ENCODE measurements at regions of chr10 and their contacts with region 1.

Region 1: GRCh38 chr10:66187053-66187733 is 738.6 kb upstream of the LRRTM3 start:
- DNase-seq: no peak
- ATAC-seq: no peak
- H3K4me3 ChIP-seq: no peak overlapping the region
- H3K27ac ChIP-seq: no peak overlapping the region
- H3K4me1 ChIP-seq: no peaks in the 10 kb centered on the region
- H3K27me3 ChIP-seq: no peaks in the 10 kb centered on the region
- CTCF ChIP-seq: no peak
- POLR2A ChIP-seq: no peak
- RAD21 ChIP-seq: no peak

Region 2: DNA sequence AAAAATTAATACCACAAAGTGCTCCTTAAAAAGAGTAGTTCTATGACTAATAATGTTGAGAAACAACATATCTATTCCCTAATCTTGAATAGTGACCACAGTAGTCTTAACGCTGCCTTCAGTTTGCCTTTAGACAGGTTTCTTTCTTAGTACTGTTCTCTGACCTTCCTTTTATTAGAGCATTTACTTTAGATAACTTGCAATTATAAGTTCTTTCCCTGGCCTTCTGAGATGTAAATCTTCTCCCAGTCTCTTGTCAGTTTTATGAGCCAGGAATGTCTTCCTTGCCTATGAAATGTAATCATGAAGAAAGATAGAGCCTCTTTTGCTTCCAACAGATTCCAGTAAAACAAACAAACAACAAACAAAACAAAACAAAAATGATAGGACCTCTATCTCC is 381.2 kb before region 1 on chr10:
- CTCF ChIA-PET with region 1: no interaction called
- POLR2A ChIA-PET with region 1: no interaction called
- dilution Hi-C with region 1: no loop called
- in situ Hi-C with region 1: no loop called
- intact Hi-C with region 1: no loop called
- DNase-seq: no peak
- ATAC-seq: no peak
- H3K4me3 ChIP-seq: no peak overlapping the region
- H3K27ac ChIP-seq: no peak overlapping the region
- H3K4me1 ChIP-seq: no peaks in the 10 kb centered on the region
- H3K27me3 ChIP-seq: no peaks in the 10 kb centered on the region
- CTCF ChIP-seq: no peak
- POLR2A ChIP-seq: no peak
- RAD21 ChIP-seq: no peak

Region 3: GRCh38 chr10:66971367-66971766 is 784.2 kb after region 1 on chr10:
- CTCF ChIA-PET with region 1: no interaction called
- POLR2A ChIA-PET with region 1: interaction called, 14 read pairs
- dilution Hi-C with region 1: no loop called
- in situ Hi-C with region 1: no loop called
- intact Hi-C with region 1: no loop called
- DNase-seq: no peak
- ATAC-seq: no peak
- H3K4me3 ChIP-seq: no peak overlapping the region
- H3K27ac ChIP-seq: no peak overlapping the region
- H3K4me1 ChIP-seq: no peaks in the 10 kb centered on the region
- H3K27me3 ChIP-seq: no peaks in the 10 kb centered on the region
- CTCF ChIP-seq: no peak
- POLR2A ChIP-seq: no peak
- RAD21 ChIP-seq: no peak